ENCODE measurements at regions of chr17 and their contacts with region 1.

Region 1: GRCh38 chr17:28644985-28645939 is at the start of gene BLTP2:
- DNase-seq: peak; percentile 97
- H3K4me3 ChIP-seq: peak within 1 kb of the TSS; percentile 95
- H3K27ac ChIP-seq: peak within 1 kb of the TSS; percentile 70
- H3K4me1 ChIP-seq: peaks cover 32% of the 10 kb centered on the region
- CTCF ChIP-seq: no peak
- total RNA-seq, gene BLTP2: 147 and 151 TPM in 2 replicates

Region 2: DNA sequence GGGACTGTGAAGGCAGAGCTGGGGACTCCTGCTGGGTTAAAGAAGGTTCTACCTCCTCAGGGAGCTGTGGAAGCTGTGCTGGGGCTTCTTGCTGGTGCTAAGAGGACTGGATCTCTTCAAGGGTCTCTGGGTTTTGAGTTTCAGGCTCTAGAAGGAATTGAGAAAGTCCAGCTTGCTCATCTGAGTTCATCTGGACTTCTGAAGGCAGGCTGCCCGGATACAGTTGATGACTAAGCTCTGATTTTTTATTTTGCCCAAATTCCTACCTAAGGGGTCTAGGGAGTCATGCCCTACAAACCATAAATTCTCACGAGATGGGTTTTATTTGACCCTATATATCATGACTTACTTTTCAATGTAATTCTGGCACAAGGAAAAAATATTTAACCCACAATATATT is 373.1 kb before region 1 on chr17:
- CTCF ChIA-PET with region 1: no interaction called
- POLR2A ChIA-PET with region 1: no interaction called
- intact Hi-C with region 1: no loop called
- DNase-seq: no peak
- H3K4me3 ChIP-seq: no peak overlapping the region
- H3K27ac ChIP-seq: no peak overlapping the region
- H3K4me1 ChIP-seq: no peaks in the 10 kb centered on the region
- CTCF ChIP-seq: no peak

Region 3: DNA sequence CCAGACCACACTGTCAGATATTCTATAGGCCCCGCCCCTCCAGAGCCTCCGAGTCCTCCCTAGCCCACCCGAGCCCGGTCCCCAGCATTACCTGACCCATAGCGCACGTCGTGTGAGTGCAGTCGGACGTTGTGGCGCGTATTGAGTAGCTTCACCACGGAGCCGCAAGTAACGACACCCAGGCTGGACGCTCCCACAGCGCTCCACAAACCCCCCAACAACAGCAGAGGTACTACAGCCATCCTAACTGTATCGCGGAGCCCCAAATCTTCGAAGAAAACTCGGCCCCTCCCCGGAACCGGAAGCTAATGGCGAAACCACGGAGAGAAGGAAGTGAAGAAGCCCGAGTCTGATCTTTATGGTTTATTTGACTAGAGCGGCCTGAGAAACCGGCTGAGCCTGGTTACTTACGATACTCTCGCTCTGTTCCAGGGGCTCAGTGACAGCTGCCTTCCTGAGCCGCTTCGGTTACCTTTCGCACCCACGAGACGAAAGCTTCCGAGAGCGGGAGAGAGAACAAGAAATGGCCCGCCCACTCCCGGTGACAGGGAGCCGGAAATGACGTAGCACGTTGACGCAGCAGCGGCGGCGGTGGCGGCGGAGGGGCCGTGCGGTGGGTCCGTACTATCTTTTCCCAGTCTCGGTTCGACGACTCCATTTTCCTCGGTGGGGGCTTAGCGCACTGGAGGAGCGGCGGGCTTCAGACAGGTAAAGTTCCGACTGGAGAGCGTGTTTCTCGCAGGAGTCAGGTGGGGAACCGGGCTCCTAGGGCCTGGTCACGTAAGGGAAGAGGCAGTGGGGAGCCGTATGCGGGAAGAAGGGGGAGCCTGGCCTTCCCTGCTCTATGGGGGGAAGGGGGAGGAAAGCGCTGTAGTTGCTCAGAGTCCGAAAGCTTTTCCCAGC is 16.6 kb after region 1 on chr17 and contains the starts of genes SDF2 and SUPT6H:
- CTCF ChIA-PET with region 1: interaction called, 13 read pairs
- POLR2A ChIA-PET with region 1: interaction called, 17 read pairs
- intact Hi-C with region 1: no loop called
- DNase-seq: peak; percentile 90
- H3K4me3 ChIP-seq: peak within 1 kb of the TSS; percentile 95
- H3K27ac ChIP-seq: peak within 1 kb of the TSS; percentile 88
- H3K4me1 ChIP-seq: peaks cover 22% of the 10 kb centered on the region
- CTCF ChIP-seq: no peak
- total RNA-seq, gene SDF2: 31.2 and 31.8 TPM in 2 replicates
- total RNA-seq, gene SUPT6H: 32.1 and 33.7 TPM in 2 replicates

Region 4: DNA sequence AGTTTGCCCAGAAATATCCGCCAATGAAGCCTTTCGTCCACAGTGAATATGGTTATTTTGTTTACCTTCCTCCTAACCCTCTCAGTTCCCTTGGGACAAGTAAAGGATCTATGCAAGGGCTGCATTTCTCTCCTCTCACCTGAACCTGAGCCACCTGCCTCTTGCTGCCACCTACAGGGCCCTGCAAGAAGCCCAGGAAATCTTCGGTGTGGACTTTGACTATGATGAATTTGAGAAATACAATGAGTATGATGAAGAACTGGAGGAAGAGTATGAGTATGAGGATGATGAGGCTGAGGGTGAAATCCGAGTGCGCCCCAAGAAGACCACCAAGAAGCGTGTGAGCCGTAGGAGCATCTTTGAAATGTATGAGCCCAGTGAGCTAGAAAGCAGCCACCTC is 30.7 kb after region 1 on chr17:
- CTCF ChIA-PET with region 1: interaction called, 4 read pairs
- POLR2A ChIA-PET with region 1: interaction called, 3 read pairs
- intact Hi-C with region 1: loop called (anchors 1 kb)
- DNase-seq: peak; percentile 56
- H3K4me3 ChIP-seq: no peak overlapping the region
- H3K27ac ChIP-seq: no peak overlapping the region
- H3K4me1 ChIP-seq: no peaks in the 10 kb centered on the region
- CTCF ChIP-seq: peak; percentile 85

Region 5: DNA sequence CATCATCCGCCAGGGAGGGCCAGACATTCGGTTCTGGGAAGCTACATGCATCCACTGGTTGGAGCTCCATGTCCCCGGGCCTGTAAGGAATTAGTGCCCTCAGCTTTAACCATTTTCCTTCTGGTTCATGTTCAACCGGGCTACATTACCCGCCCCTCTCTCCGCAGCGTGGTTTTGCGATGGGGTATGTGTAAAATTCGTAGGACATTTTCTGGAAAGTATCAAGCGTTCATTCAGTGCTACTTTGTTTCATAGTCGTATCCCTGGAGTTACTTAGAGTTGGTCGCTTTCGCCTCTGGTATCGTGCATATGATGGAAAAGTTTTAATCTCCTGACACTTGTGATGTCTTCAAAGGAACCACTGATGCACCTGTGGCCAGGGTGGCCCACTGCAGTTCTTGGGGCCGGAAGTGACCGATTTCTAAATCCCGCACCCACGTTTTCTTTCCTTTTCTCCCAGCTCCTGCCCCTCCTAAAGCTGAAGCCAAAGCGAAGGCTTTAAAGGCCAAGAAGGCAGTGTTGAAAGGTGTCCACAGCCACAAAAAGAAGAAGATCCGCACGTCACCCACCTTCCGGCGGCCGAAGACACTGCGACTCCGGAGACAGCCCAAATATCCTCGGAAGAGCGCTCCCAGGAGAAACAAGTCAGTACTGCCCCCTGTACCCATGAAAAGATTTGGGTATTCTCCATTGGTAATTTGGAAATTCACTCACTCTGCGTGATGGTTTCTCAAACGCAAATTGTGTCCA is 75.2 kb after region 1 on chr17:
- CTCF ChIA-PET with region 1: no interaction called
- POLR2A ChIA-PET with region 1: interaction called, 4 read pairs
- intact Hi-C with region 1: loop called (anchors 2 kb)
- DNase-seq: peak; percentile 62
- H3K4me3 ChIP-seq: peak overlapping the region; percentile 88
- H3K27ac ChIP-seq: peak overlapping the region; percentile 82
- H3K4me1 ChIP-seq: peaks cover 50% of the 10 kb centered on the region
- CTCF ChIP-seq: peak; percentile 62

Measured in OCI-LY7 (cell line).